ENCODE measurements at regions of chr5 and their contacts with region 1.

Region 1: DNA sequence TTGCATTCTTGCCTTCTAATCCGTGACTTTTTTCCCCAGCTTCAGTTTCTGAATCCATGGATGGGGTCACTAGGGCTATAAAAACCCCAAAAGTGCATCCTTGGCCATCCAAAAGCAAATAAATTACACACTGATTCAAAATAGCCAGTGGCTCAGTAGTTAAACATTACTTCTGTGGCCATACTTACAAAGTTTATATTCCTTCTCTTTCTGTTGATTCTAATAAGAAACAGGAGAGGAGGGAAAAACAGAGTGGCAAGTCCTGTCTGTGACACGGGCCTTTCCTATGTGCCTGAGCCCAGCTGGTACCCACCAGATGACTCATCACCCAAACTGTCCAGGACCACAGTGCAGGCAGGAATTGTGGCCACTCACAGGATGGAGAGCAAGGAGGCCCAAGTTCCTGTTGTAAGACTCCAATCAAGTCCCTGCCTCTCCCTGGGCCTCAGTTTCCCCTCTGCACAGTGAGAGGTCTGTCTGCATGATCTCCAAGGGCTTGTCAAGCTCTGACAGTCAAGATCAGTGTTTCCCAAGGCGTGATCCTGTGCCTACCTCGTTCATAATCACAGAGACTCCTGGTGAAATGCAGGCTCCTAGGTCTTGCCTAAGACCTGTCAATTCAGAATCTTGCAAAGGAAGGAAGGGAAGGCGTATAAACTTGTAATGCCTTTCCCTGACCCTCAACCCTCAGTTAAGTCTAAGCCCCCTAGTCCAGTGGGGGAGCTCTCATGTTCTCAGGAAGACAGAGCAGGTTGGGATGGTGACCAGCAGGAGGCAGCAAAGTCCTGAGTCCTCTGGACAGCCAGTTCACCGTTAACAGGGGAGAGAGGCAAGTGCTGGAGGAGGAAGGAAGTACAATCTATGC is 29.5 kb downstream of the TNIP1 start:
- DNase-seq: peak; percentile 88
- ATAC-seq: peak; percentile 83
- H3K4me3 Mint-ChIP-seq: no peak overlapping the region
- H3K27ac Mint-ChIP-seq: peak overlapping the region; percentile 36
- H3K4me1 Mint-ChIP-seq: peaks cover 12% of the 10 kb centered on the region
- H3K27me3 Mint-ChIP-seq: no peaks in the 10 kb centered on the region
- CTCF ChIP-seq: peak; percentile 75

Region 2: DNA sequence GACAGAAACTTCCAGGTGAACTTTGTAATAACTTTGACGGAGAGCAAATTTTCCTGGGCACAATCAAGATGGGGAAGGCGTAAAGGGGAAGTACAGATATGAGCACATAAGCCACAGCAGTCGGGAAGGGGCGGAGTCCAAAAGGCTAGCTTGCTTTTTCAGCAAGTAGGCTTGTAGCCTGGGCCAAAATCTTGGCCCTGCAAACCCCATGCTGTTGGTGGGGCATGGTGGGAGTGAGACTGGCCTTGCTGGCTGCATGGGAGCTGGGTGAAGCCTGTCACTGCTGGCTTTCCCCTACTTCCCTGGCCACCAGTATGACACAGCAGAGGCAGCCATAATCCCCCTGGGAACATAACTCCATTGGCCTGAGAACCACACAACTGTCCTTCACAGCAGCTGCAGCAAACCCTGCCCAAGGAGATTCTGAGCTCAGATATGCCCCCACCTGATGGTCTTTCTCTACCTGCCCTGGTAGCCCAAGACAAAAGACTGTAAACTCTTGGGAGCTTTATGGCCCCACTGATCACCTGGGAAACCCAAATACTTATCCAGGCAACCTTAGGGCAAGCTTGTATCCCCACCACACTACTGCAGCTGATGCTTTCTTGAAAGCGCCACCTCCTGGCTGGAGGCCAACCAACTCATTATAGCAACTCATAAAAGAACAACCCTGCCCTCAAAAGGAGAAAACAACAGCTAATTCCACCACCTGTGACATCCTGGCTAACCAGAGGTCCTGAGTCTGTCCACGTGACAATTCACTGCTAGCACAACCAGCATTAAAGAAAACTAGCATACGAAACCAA is 316.5 kb before region 1 on chr5:
- CTCF ChIA-PET with region 1: no interaction called
- POLR2A ChIA-PET with region 1: no interaction called
- intact Hi-C with region 1: no loop called
- DNase-seq: peak; percentile 57
- ATAC-seq: peak; percentile 7
- H3K4me3 Mint-ChIP-seq: no peak overlapping the region
- H3K27ac Mint-ChIP-seq: peak overlapping the region; percentile 56
- H3K4me1 Mint-ChIP-seq: peaks cover 51% of the 10 kb centered on the region
- H3K27me3 Mint-ChIP-seq: no peaks in the 10 kb centered on the region
- CTCF ChIP-seq: peak; percentile 20

Region 3: GRCh38 chr5:151037561-151038411 is 13.5 kb before region 1 on chr5:
- CTCF ChIA-PET with region 1: interaction called, 18 read pairs
- POLR2A ChIA-PET with region 1: no interaction called
- intact Hi-C with region 1: no loop called
- DNase-seq: no peak
- ATAC-seq: no peak
- H3K4me3 Mint-ChIP-seq: no peak overlapping the region
- H3K27ac Mint-ChIP-seq: no peak overlapping the region
- H3K4me1 Mint-ChIP-seq: peaks cover 6% of the 10 kb centered on the region
- H3K27me3 Mint-ChIP-seq: no peaks in the 10 kb centered on the region
- CTCF ChIP-seq: no peak

Region 4: GRCh38 chr5:151068433-151069197 is 17.3 kb after region 1 on chr5:
- CTCF ChIA-PET with region 1: interaction called, 22 read pairs
- POLR2A ChIA-PET with region 1: interaction called, 5 read pairs
- intact Hi-C with region 1: no loop called
- DNase-seq: peak; percentile 81
- ATAC-seq: peak; percentile 80
- H3K4me3 Mint-ChIP-seq: peak overlapping the region; percentile 35
- H3K27ac Mint-ChIP-seq: peak overlapping the region; percentile 85
- H3K4me1 Mint-ChIP-seq: peaks cover 95% of the 10 kb centered on the region
- H3K27me3 Mint-ChIP-seq: no peaks in the 10 kb centered on the region
- CTCF ChIP-seq: no peak

Region 5: GRCh38 chr5:151080623-151081430 is 29.5 kb after region 1 on chr5 and contains the start of gene TNIP1:
- CTCF ChIA-PET with region 1: interaction called, 23 read pairs
- POLR2A ChIA-PET with region 1: interaction called, 3 read pairs
- intact Hi-C with region 1: no loop called
- DNase-seq: peak; percentile 94
- ATAC-seq: peak; percentile 79
- H3K4me3 Mint-ChIP-seq: peak within 1 kb of the TSS; percentile 85
- H3K27ac Mint-ChIP-seq: peak within 1 kb of the TSS; percentile 96
- H3K4me1 Mint-ChIP-seq: peaks cover 77% of the 10 kb centered on the region
- H3K27me3 Mint-ChIP-seq: no peaks in the 10 kb centered on the region
- CTCF ChIP-seq: no peak
- total RNA-seq, gene TNIP1: 222 TPM

Region 6: DNA sequence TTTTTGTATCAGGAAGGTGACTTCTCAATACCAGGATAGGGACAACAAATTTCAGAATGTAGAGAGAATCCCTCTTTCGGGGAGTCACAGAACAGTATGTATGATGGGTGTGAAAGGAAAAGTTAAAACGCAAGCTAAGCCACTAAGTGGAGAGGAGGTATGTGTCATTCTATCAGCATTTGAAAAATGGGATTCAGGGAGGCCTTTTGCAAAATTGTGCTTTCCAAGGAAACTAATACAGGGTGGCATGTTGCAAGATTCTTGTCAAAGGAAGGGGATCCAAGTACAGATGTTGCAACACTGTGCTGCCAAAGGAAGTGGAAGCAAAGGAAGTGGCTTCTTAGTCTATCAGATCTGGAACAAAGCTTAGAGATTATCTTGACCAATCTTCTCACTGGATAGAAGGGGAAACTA is 42.2 kb after region 1 on chr5:
- CTCF ChIA-PET with region 1: interaction called, 47 read pairs
- POLR2A ChIA-PET with region 1: interaction called, 7 read pairs
- intact Hi-C with region 1: loop called (anchors 5 kb)
- DNase-seq: no peak
- ATAC-seq: peak; percentile 15
- H3K4me3 Mint-ChIP-seq: peak overlapping the region; percentile 61
- H3K27ac Mint-ChIP-seq: peak overlapping the region; percentile 93
- H3K4me1 Mint-ChIP-seq: peaks cover 68% of the 10 kb centered on the region
- H3K27me3 Mint-ChIP-seq: peaks cover 4% of the 10 kb centered on the region
- CTCF ChIP-seq: no peak

Measured in activated CD8-positive, alpha-beta T cell treated with anti-CD3 and anti-CD28 coated beads for 36 hours (primary cell).